ENCODE measurements at regions of chr11 and their contacts with region 1.

Region 1: GRCh38 chr11:27506200-27507182 is at the start of gene LIN7C:
- DNase-seq: peak; percentile 99
- H3K4me3 ChIP-seq: peak within 1 kb of the TSS; percentile 82 to 96 (median 93)
- H3K27ac ChIP-seq: peak within 1 kb of the TSS; percentile 91 to 93 (median 92)
- H3K4me1 ChIP-seq: peaks cover 38 to 53% (median 47%) of the 10 kb centered on the region in 4 donors
- H3K27me3 ChIP-seq: no peaks in the 10 kb centered on the region
- CTCF ChIP-seq: peak in 2 of 3 experiments; percentile 10 to 22
- EP300 ChIP-seq: no peak
- POLR2A ChIP-seq: peak; percentile 66
- total RNA-seq, gene LIN7C: 33.2 to 46.3 (median 44.0) TPM

Region 2: GRCh38 chr11:27468209-27468994 is 38.1 kb before region 1 on chr11:
- intact Hi-C with region 1: no loop called
- DNase-seq: no peak
- H3K4me3 ChIP-seq: peak overlapping the region in 1 of 4 donors; percentile 85
- H3K27ac ChIP-seq: peak overlapping the region; percentile 20 to 94 (median 30)
- H3K4me1 ChIP-seq: peaks cover 43 to 87% (median 82%) of the 10 kb centered on the region in 4 donors
- H3K27me3 ChIP-seq: no peaks in the 10 kb centered on the region
- CTCF ChIP-seq: no peak
- EP300 ChIP-seq: no peak
- POLR2A ChIP-seq: no peak

Region 3: DNA sequence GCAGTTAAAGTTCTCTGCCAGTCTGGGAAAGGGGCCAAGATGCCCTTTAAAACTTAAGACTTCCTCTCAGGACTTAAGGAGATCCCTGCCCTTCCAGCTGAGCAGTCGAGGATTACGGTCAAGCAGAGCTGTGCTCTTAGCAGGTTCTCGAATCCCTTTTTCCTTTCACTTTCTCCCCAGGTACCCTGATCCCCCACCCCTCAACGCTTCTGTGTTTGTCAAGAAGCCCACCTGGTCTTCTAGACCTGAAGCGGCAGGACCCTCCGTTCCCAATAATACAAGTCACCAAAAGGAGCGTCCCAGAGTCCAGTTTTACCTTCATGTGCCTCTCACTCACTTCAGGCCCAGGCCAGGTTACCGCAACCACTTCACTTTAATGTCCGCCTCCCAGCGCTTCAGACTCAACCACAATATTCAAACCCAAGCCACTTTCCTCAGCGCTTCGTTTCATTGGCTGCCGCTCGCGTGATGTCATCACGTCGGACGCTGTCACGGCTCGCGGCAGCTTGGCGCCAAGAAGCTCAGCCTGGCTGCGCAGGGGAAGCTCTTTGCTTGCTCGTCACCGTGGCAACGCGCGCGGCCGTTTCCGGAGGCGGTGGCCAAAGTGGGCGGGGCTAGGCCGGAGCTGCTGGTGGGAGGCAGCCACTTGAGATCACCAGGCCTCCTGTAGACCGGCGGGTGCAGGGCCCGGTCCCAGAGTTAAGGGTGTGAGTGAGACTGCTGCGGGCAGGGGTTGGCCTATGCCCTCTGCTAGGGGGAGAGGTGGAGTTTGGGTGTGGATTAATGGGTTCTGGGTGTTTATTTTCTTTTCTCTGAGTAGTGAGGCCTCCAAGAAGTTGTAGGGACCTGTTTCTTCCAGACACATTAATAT is 601.5 kb after region 1 on chr11 and contains the starts of genes KIF18A and METTL15:
- intact Hi-C with region 1: loop called (anchors 5 kb)
- DNase-seq: peak; percentile 100
- H3K4me3 ChIP-seq: peak within 1 kb of the TSS; percentile 53 to 74 (median 62)
- H3K27ac ChIP-seq: peak within 1 kb of the TSS; percentile 80 to 85 (median 81)
- H3K4me1 ChIP-seq: peaks cover 33 to 45% (median 43%) of the 10 kb centered on the region in 4 donors
- H3K27me3 ChIP-seq: no peaks in the 10 kb centered on the region
- CTCF ChIP-seq: no peak
- EP300 ChIP-seq: no peak
- POLR2A ChIP-seq: no peak
- total RNA-seq, gene KIF18A: 0.23 to 0.52 (median 0.33) TPM in 3 of 4 donors, not detected in the other
- total RNA-seq, gene METTL15: 7.5 to 10.0 (median 8.5) TPM